CD8-positive, alpha-beta T cell (primary cell): ENCODE measurements at regions of chr15 and their contacts with region 1.

Region 1: GRCh38 chr15:71151081-71151480 is 35.8 kb downstream of the THSD4 start:
- DNase-seq: no peak
- ATAC-seq: no peak
- H3K4me3 ChIP-seq: no peak overlapping the region
- H3K4me3 Mint-ChIP-seq: no peak overlapping the region
- H3K27ac ChIP-seq: no peak overlapping the region
- H3K27ac Mint-ChIP-seq: no peak overlapping the region
- H3K4me1 ChIP-seq: no peaks in the 10 kb centered on the region
- H3K4me1 Mint-ChIP-seq: no peaks in the 10 kb centered on the region
- H3K27me3 ChIP-seq: no peaks in the 10 kb centered on the region
- H3K27me3 Mint-ChIP-seq: peaks cover 2% of the 10 kb centered on the region
- CTCF ChIP-seq: no peak

Region 2: GRCh38 chr15:71093121-71094024 is 57.7 kb before region 1 on chr15:
- CTCF ChIA-PET with region 1: no interaction called
- POLR2A ChIA-PET with region 1: no interaction called
- intact Hi-C with region 1: loop called in 1 of 2 experiments (anchors 10 kb)
- DNase-seq: no peak
- ATAC-seq: no peak
- H3K4me3 ChIP-seq: no peak overlapping the region
- H3K4me3 Mint-ChIP-seq: no peak overlapping the region
- H3K27ac ChIP-seq: no peak overlapping the region
- H3K27ac Mint-ChIP-seq: no peak overlapping the region
- H3K4me1 ChIP-seq: no peaks in the 10 kb centered on the region
- H3K4me1 Mint-ChIP-seq: no peaks in the 10 kb centered on the region
- H3K27me3 ChIP-seq: no peaks in the 10 kb centered on the region
- H3K27me3 Mint-ChIP-seq: peaks cover 8% of the 10 kb centered on the region
- CTCF ChIP-seq: no peak